ENCODE measurements at regions of chr22 and their contacts with region 1.

Region 1: GRCh38 chr22:24951942-24952836 is at the start of gene KIAA1671:
- DNase-seq: peak; percentile 85 to 89
- ATAC-seq: peak; percentile 94 to 97 (median 96)
- H3K4me3 ChIP-seq: peak within 1 kb of the TSS; percentile 76
- H3K27ac ChIP-seq: peak within 1 kb of the TSS; percentile 54
- H3K4me1 ChIP-seq: no peaks in the 10 kb centered on the region
- H3K27me3 ChIP-seq: peaks cover 0 to 60% (median 5%) of the 10 kb centered on the region in 3 donors
- CTCF ChIP-seq: peak; percentile 96
- total RNA-seq, gene KIAA1671: 12.2 to 56.9 (median 26.1) TPM

Region 2: GRCh38 chr22:24977370-24978221 is 25.4 kb after region 1 on chr22:
- intact Hi-C with region 1: no loop called
- DNase-seq: peak; percentile 43 to 68
- ATAC-seq: peak; percentile 41 to 66 (median 60)
- H3K4me3 ChIP-seq: no peak overlapping the region
- H3K27ac ChIP-seq: peak overlapping the region; percentile 71
- H3K4me1 ChIP-seq: no peaks in the 10 kb centered on the region
- H3K27me3 ChIP-seq: no peaks in the 10 kb centered on the region
- CTCF ChIP-seq: no peak

Region 3: DNA sequence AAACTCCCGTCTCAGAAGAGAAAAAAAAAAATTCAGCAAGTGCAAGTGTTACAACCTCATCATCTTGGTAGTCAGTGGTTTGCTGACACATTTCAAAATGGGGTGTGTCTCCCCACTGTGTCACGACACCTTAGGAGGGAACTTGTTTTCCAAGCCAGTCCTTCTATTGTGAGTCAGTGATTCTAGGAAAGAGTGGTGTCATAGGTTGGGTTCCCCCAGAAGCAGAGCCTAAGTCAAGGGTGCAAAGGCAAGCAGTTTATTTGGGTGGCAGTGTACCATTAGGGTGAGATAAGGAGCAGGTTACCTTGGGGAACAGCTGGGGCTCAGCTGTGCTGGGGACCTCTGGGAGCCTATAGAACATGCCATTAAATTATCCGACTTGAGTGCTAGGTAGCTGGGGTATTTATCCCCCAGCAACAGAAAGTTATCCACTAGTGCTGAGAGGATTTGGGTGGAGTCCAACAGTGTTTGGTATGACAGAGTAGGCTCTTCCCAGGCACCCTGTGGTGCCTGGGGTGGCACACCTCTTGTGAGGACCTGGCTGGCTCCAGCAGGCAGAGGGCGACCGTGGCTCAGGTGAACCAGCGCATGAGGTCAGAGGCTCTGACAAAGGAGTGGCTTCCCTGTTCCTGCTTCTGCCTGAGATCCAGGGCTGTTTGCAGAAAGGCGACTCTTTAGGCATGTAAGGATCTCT is 42.0 kb after region 1 on chr22:
- intact Hi-C with region 1: no loop called
- DNase-seq: no peak
- ATAC-seq: no peak
- H3K4me3 ChIP-seq: no peak overlapping the region
- H3K27ac ChIP-seq: no peak overlapping the region
- H3K4me1 ChIP-seq: peaks cover 9% of the 10 kb centered on the region
- H3K27me3 ChIP-seq: peaks cover 0 to 3% (median 0%) of the 10 kb centered on the region in 3 donors
- CTCF ChIP-seq: no peak

Region 4: DNA sequence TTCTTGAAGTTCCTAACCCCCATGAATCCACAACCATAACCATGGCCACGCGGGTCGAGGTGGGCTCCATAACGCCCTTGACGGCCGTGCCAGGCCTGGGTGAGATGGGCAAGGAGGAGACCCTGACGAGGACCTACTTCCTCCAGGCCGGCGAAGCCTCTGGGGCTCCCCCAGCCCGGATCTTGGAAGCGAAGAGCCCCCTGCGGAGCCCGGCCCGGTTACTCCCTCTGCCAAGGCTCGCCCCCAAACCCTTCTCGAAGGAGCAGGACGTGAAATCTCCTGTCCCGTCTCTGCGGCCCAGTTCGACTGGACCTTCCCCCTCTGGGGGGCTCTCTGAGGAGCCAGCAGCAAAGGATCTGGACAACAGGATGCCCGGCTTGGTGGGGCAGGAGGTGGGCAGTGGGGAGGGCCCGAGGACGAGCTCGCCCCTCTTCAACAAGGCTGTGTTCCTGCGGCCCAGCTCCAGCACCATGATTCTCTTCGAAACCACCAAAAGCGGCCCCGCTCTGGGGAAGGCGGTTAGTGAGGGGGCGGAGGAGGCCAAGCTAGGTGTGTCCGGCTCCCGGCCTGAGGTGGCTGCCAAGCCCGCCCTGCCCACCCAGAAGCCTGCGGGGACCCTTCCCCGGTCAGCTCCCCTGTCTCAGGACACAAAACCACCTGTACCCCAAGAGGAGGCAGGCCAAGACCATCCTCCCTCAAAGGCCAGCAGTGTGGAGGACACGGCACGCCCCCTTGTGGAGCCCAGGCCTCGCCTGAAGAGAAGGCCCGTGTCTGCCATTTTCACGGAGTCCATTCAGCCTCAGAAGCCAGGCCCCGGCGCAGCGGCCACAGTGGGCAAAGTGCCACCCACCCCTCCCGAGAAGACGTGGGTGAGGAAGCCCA is 76.0 kb after region 1 on chr22:
- intact Hi-C with region 1: loop called in 1 of 2 experiments (anchors 5 kb)
- DNase-seq: peak; percentile 25 to 58
- ATAC-seq: no peak
- H3K4me3 ChIP-seq: no peak overlapping the region
- H3K27ac ChIP-seq: no peak overlapping the region
- H3K4me1 ChIP-seq: peaks cover 5% of the 10 kb centered on the region
- H3K27me3 ChIP-seq: peaks cover 0 to 3% (median 0%) of the 10 kb centered on the region in 3 donors
- CTCF ChIP-seq: peak; percentile 23

Region 5: GRCh38 chr22:25048659-25049647 is 96.8 kb after region 1 on chr22:
- intact Hi-C with region 1: loop called (anchors 1 to 2 kb)
- DNase-seq: peak; percentile 56 to 74
- ATAC-seq: peak; percentile 78 to 85 (median 84)
- H3K4me3 ChIP-seq: no peak overlapping the region
- H3K27ac ChIP-seq: no peak overlapping the region
- H3K4me1 ChIP-seq: no peaks in the 10 kb centered on the region
- H3K27me3 ChIP-seq: no peaks in the 10 kb centered on the region
- CTCF ChIP-seq: peak; percentile 86

Measured in psoas muscle (tissue), 8 donors.